Naive thymus-derived CD4-positive, alpha-beta T cell (primary cell): ENCODE measurements at regions of chr2 and their contacts with region 1.

Region 1: GRCh38 chr2:95043300-95044093 is 18.0 kb downstream of the MAL start:
- DNase-seq: peak in 3 of 9 donors; percentile 35 to 45 (median 39)
- ATAC-seq: peak; percentile 37
- H3K4me3 ChIP-seq: no peak overlapping the region
- H3K4me3 Mint-ChIP-seq: peak overlapping the region in 7 of 10 donors; percentile 9 to 68 (median 41)
- H3K27ac ChIP-seq: peak overlapping the region; percentile 49
- H3K27ac Mint-ChIP-seq: peak overlapping the region; percentile 49 to 98 (median 67)
- H3K4me1 ChIP-seq: peaks cover 0 to 62% of the 10 kb centered on the region in 2 donors
- H3K4me1 Mint-ChIP-seq: peaks cover 26 to 99% (median 86%) of the 10 kb centered on the region in 7 donors
- H3K27me3 ChIP-seq: no peaks in the 10 kb centered on the region
- H3K27me3 Mint-ChIP-seq: no peaks in the 10 kb centered on the region

Region 2: DNA sequence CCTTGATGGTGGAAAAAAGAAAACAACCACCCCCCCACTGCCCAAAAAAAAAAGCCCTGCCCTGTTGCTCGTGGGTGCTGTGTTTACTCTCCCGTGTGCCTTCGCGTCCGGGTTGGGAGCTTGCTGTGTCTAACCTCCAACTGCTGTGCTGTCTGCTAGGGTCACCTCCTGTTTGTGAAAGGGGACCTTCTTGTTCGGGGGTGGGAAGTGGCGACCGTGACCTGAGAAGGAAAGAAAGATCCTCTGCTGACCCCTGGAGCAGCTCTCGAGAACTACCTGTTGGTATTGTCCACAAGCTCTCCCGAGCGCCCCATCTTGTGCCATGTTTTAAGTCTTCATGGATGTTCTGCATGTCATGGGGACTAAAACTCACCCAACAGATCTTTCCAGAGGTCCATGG is 10.0 kb after region 1 on chr2:
- CTCF ChIA-PET with region 1: interaction called, 9 read pairs
- POLR2A ChIA-PET with region 1: interaction called, 51 read pairs
- intact Hi-C with region 1: loop called in 1 of 2 experiments (anchors 1 kb)
- DNase-seq: peak in 1 of 9 donors; percentile 42
- ATAC-seq: no peak
- H3K4me3 ChIP-seq: no peak overlapping the region
- H3K4me3 Mint-ChIP-seq: peak overlapping the region; percentile 2 to 78 (median 49)
- H3K27ac ChIP-seq: peak overlapping the region; percentile 62
- H3K27ac Mint-ChIP-seq: peak overlapping the region; percentile 76 to 98 (median 90)
- H3K4me1 ChIP-seq: peaks cover 0 to 70% of the 10 kb centered on the region in 2 donors
- H3K4me1 Mint-ChIP-seq: peaks cover 29 to 94% (median 87%) of the 10 kb centered on the region in 7 donors
- H3K27me3 ChIP-seq: no peaks in the 10 kb centered on the region
- H3K27me3 Mint-ChIP-seq: no peaks in the 10 kb centered on the region

Region 3: GRCh38 chr2:95062242-95063085 is 19.0 kb after region 1 on chr2:
- CTCF ChIA-PET with region 1: interaction called, 4 read pairs
- POLR2A ChIA-PET with region 1: interaction called, 13 read pairs
- intact Hi-C with region 1: no loop called
- DNase-seq: no peak
- ATAC-seq: no peak
- H3K4me3 ChIP-seq: peak overlapping the region; percentile 8
- H3K4me3 Mint-ChIP-seq: peak overlapping the region; percentile 42 to 81 (median 78)
- H3K27ac ChIP-seq: peak overlapping the region; percentile 68
- H3K27ac Mint-ChIP-seq: peak overlapping the region; percentile 84 to 95 (median 90)
- H3K4me1 ChIP-seq: peaks cover 0 to 24% of the 10 kb centered on the region in 2 donors
- H3K4me1 Mint-ChIP-seq: peaks cover 24 to 58% (median 50%) of the 10 kb centered on the region in 7 donors
- H3K27me3 ChIP-seq: no peaks in the 10 kb centered on the region
- H3K27me3 Mint-ChIP-seq: no peaks in the 10 kb centered on the region

Region 4: DNA sequence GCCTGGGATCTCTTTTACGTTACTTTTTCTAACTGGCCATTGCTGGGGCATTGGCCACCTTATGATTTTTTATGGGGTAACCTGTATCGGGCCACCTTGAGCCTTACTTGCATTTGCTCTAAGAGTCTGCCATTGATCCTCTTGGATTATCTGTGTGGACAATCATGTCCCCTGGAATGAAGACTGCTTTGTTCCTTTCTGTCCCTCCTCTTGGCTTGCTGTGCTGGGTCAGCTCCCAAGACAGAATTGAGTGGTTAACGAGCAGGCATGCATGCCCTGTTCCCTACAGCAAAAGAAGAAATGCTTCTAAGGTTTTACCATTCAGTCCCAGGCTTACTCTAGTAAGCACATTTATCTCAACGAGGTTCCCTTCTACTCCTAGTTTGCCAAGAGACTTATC is 28.4 kb after region 1 on chr2:
- CTCF ChIA-PET with region 1: interaction called, 6 read pairs
- POLR2A ChIA-PET with region 1: interaction called, 581 read pairs
- intact Hi-C with region 1: loop called in 1 of 2 experiments (anchors 5 kb)
- DNase-seq: no peak
- ATAC-seq: no peak
- H3K4me3 ChIP-seq: no peak overlapping the region
- H3K4me3 Mint-ChIP-seq: peak overlapping the region in 2 of 10 donors; percentile 9 to 96
- H3K27ac ChIP-seq: no peak overlapping the region
- H3K27ac Mint-ChIP-seq: peak overlapping the region in 8 of 9 donors; percentile 20 to 99 (median 98)
- H3K4me1 ChIP-seq: peaks cover 22 to 45% of the 10 kb centered on the region in 2 donors
- H3K4me1 Mint-ChIP-seq: peaks cover 7 to 61% (median 54%) of the 10 kb centered on the region in 7 donors
- H3K27me3 ChIP-seq: no peaks in the 10 kb centered on the region
- H3K27me3 Mint-ChIP-seq: no peaks in the 10 kb centered on the region